ENCODE measurements at regions of chr1 and their contacts with region 1.

Region 1: DNA sequence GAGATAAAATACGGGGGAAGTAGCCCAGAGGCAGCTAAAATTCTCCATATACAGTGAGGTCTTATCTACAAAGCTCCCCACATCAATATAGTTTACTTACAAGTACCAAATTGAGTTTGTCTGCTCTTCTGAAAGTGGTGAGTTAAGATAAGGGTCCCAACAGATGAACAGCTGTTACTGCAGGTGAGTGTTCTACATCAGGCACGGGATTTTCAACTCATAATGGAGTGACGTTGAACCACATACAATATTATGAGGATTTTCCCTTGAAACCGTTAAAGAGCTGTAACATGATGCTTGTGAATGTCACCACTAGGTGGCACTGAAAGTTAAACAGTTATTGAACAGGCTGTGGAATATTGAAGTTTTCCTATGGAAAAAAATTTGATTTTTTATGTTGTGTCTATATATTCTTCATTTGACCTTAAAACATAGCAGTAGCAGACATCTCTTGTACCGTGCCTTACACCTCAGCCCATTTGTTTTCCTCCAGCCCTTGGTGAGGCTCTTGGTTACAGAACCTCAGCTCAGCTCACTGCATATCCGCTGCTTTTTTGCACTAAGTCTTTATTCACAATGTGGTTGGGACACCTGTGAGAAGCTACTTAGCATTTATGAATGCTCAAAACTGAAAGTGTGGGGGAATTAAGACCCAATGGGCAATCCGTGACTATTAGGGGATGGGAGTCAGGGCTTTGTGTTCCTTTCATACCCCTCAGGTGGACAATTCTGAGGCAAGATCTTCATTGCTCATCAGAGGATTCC is 23.2 kb downstream of the CD1D start:
- DNase-seq: peak in 1 of 2 experiments; percentile 7
- H3K4me3 ChIP-seq: no peak overlapping the region
- H3K27ac ChIP-seq: no peak overlapping the region
- H3K4me1 ChIP-seq: no peaks in the 10 kb centered on the region
- H3K27me3 ChIP-seq: 0 out of 2 replicates have a peak, but pooled peaks cover 4% of the 10 kb centered on the region
- CTCF ChIP-seq: peak; percentile 84

Region 2: DNA sequence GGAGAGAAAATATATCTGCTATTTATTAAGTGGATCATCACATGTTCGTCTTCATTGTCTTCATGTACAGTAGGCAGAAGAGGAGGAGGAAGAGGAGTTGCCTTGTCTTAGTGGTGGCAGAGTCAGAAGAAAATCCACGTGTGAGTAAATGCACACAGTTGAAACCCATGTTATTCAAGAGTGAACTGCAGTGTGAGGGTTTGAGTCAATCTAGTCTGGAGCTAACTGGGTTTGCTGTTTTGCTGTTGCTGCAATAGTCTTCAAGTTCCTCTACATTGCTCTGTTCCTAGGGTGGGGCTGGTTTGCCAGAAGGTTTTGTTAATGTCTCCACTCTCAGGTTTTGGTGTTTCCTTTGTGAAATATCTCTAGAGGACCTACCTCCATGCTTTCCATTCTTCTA is 47.3 kb after region 1 on chr1:
- CTCF ChIA-PET with region 1: no interaction called
- POLR2A ChIA-PET with region 1: no interaction called
- intact Hi-C with region 1: no loop called
- DNase-seq: no peak
- H3K4me3 ChIP-seq: no peak overlapping the region
- H3K27ac ChIP-seq: no peak overlapping the region
- H3K4me1 ChIP-seq: no peaks in the 10 kb centered on the region
- H3K27me3 ChIP-seq: peaks cover 11% of the 10 kb centered on the region; the same call in 1 of the 2 replicates
- CTCF ChIP-seq: no peak

Region 3: GRCh38 chr1:158527190-158527815 is 323.4 kb after region 1 on chr1:
- CTCF ChIA-PET with region 1: no interaction called
- POLR2A ChIA-PET with region 1: no interaction called
- intact Hi-C with region 1: loop called (anchors 2 kb)
- DNase-seq: peak in 1 of 2 experiments; percentile 42
- H3K4me3 ChIP-seq: no peak overlapping the region
- H3K27ac ChIP-seq: no peak overlapping the region
- H3K4me1 ChIP-seq: no peaks in the 10 kb centered on the region
- H3K27me3 ChIP-seq: 0 out of 2 replicates have a peak, but pooled peaks cover 3% of the 10 kb centered on the region
- CTCF ChIP-seq: peak; percentile 72

Region 4: DNA sequence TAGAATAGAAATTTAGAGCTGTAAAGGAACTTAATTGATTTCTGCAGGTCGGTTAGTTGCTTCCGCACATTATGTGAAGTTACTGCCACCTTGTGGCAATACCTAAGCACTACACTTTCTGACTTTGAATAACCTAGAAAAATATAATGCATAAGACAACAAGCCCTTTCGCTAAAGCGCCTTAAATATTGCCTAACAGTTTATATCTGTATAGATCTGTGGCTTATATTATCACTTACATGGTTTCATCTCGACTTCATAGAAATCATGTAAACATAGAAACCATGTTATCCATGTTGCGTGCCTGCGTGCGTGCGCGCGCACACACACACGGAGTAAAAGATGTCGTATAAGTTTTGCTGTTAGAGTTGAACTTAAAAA is 794.9 kb after region 1 on chr1:
- CTCF ChIA-PET with region 1: interaction called, 16 read pairs
- POLR2A ChIA-PET with region 1: no interaction called
- intact Hi-C with region 1: loop called (anchors 1 kb)
- DNase-seq: peak; percentile 23 to 35
- H3K4me3 ChIP-seq: no peak overlapping the region
- H3K27ac ChIP-seq: no peak overlapping the region
- H3K4me1 ChIP-seq: no peaks in the 10 kb centered on the region
- H3K27me3 ChIP-seq: no peaks in the 10 kb centered on the region
- CTCF ChIP-seq: peak; percentile 91

Region 5: GRCh38 chr1:159071970-159072582 is 868.2 kb after region 1 on chr1:
- CTCF ChIA-PET with region 1: no interaction called
- POLR2A ChIA-PET with region 1: no interaction called
- intact Hi-C with region 1: loop called (anchors 2 kb)
- DNase-seq: no peak
- H3K4me3 ChIP-seq: no peak overlapping the region
- H3K27ac ChIP-seq: no peak overlapping the region
- H3K4me1 ChIP-seq: no peaks in the 10 kb centered on the region
- H3K27me3 ChIP-seq: no peaks in the 10 kb centered on the region
- CTCF ChIP-seq: peak; percentile 77

Measured in PC-9 (cell line).